HEK293T (cell line): ENCODE measurements at regions of chr10 and their contacts with region 1.

Region 1: DNA sequence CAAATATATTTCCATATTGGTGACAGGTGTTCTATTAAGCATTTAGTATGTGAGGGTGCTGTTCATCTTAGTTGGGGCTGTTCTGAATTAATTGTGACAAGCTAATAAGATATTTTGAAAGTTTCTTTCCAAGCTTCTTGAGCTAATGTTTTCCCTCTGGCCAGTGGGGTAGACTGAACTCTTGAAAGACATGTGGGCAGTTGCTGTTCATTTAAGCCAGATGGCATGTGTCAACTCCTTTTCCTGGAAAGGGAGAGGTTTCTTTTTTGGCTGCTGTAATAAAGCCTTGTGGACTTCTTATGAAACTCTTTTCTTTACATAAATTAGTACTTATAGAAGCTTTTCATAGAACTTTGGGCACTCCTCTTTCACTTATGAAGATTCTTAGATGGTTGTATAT is 21.7 kb downstream of the RAB18 start:
- DNase-seq: no peak

Region 2: DNA sequence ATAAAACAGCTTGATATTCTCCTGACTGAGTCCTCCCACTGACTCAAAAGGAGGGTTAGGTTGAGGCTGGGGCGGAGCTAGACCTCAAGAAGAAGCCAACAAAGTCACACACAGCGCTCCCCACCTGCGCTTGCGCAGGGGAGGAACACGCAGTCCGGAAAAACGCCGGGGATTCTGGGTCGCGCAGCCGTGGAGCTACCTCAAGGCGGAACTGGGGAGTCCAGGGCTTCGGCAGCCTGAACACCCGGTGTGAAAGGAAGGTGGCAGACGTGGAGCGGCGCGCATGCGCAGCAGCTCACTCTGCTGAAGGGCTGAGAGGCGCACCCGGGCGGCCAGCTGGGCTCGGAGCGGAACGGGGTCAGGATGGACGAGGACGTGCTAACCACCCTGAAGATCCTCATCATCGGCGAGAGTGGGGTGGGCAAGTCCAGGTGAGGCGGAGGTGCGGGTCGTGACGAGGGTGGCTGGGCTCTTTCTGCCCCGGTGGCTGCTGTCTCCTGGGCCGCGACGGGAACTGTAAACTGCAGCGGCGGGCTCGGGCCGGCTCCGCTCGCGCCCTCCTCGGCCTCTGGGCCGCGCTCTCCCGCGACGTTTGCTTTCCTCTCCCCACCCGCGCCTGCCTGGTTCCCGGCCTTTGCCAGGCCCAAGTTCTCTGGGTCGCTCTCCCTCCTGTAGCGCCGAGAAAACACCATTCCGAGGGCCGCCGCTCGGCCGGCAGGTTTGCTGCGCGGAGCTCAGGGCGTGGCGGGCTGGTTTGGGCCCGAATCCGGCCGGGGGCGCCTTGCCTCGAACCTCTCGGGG is 21.6 kb before region 1 on chr10 and contains the start of gene RAB18:
- CTCF ChIA-PET with region 1: no interaction called
- POLR2A ChIA-PET with region 1: interaction called, 10 read pairs
- DNase-seq: peak; percentile 85

Region 3: DNA sequence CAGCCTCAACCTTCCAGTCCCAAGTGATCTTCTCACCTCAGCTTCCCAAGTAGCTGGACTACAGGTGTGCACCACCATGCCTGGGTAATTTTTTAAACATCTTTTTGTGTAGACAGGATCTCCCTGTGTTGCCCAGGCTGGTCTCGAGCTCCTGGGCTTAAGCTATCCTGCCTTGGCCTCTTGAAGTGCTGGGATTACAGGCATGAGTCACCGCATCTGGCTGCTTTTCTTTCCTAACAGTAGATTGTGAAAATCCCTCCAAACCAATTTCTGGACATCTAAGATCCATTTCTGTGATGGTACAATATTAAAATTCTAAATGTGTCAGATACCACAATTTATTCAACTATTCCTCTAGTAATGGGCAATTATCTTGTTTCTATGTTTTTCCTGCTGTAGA is 17.0 kb after region 1 on chr10:
- CTCF ChIA-PET with region 1: no interaction called
- POLR2A ChIA-PET with region 1: no interaction called
- DNase-seq: no peak